Prostate gland (tissue), 2 donors: ENCODE measurements at regions of chr1 and their contacts with region 1.

Region 1: GRCh38 chr1:100037927-100038659 is 68.3 kb downstream of the SLC35A3 start:
- DNase-seq: peak; percentile 91
- H3K4me3 ChIP-seq: peak overlapping the region; percentile 94 to 96
- H3K27ac ChIP-seq: peak overlapping the region; percentile 97 to 99
- H3K4me1 ChIP-seq: no peaks in the 10 kb centered on the region
- H3K27me3 ChIP-seq: no peaks in the 10 kb centered on the region
- CTCF ChIP-seq: peak in 1 of 4 experiments; percentile 8
- POLR2A ChIP-seq: peak; percentile 98

Region 2: DNA sequence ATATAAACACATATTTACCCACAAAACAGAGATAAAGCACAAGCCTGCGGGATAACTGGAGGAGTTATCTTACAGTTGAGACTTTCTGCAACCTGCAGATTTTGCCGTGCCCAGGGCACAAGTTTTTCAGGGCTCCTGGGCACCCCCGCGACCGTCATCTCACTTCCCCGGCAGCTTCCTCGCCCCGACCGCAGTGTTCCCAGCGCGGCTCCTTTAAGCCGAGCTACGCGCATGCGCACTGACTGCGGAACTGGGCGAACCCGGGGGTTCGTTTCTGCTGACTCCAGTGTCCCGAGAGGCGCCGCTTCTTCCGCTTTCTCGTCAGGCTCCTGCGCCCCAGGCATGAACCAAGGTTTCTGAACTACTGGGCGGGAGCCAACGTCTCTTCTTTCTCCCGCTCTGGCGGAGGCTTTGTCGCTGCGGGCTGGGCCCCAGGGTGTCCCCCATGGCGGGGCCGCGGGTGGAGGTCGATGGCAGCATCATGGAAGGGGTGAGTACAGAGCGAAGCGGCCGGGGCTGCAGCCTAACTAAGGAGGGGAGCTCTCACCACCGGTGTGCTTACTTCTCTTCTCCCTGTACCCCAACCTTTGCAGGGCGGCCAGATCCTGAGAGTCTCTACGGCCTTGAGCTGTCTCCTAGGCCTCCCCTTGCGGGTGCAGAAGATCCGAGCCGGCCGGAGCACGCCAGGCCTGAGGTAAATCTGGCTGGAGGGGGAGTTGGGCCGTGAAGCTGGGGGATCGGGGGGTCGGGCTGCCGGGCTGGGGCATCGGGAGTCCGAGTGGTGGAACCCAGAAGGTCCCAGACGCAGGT is 228.0 kb after region 1 on chr1 and contains the start of gene RTCA:
- intact Hi-C with region 1: loop called (anchors 10 kb)
- DNase-seq: peak; percentile 95
- H3K4me3 ChIP-seq: peak within 1 kb of the TSS; percentile 81 to 86
- H3K27ac ChIP-seq: peak within 1 kb of the TSS; percentile 79 to 81
- H3K4me1 ChIP-seq: peaks cover 4% of the 10 kb centered on the region
- H3K27me3 ChIP-seq: no peaks in the 10 kb centered on the region
- CTCF ChIP-seq: peak in 1 of 4 experiments; percentile 14
- POLR2A ChIP-seq: peak; percentile 84
- total RNA-seq, gene RTCA: 19.8 to 22.4 TPM

Region 3: GRCh38 chr1:100387209-100387608 is 349.1 kb after region 1 on chr1:
- intact Hi-C with region 1: loop called (anchors 5 kb)
- DNase-seq: no peak
- H3K4me3 ChIP-seq: no peak overlapping the region
- H3K27ac ChIP-seq: peak overlapping the region in 1 of 2 donors; percentile 14
- H3K4me1 ChIP-seq: no peaks in the 10 kb centered on the region
- H3K27me3 ChIP-seq: no peaks in the 10 kb centered on the region
- CTCF ChIP-seq: no peak
- POLR2A ChIP-seq: no peak